Mammary epithelial cell (primary cell): ENCODE measurements at regions of chr6 and their contacts with region 1.

Region 1: DNA sequence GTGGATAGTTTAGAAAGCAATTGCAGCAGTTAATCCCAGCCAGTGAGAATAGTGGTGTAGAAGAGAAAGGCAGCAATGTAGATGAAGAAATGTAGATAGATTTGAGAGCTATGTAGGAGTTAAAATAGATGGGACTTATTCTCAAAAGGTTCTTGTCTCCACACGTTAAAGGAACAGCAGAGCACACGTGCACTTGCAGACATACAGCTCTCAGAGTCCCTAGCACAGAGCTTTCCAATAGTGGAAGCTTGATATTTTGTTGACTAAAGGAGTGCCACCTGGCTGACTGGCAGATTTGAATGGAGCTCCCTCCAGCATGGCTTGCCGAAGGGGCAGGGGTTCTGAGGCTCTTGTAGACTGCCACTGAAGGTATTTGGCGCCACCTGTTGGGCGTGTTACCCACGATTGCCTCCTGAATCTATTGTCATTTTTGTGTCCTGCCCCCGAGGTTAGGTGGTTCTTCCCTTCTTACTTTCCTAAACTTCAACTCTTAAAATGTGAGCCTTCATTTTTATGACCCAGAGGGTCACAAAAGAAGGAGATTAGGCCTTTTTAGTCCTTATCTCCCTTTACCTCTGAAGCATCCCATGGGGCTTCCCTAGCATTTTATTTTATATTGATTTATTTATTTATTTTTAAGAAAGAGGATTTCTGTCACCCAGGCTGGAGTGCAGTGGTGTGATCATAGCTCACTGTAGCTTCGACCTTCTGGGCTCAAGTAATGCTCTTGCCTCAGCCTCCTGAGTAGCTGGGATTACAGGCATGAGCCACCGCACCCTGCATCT is 16.4 kb downstream of the BRD2 start:
- DNase-seq: peak; percentile 60
- H3K4me3 ChIP-seq: no peak overlapping the region
- H3K27ac ChIP-seq: no peak overlapping the region
- H3K4me1 ChIP-seq: no peaks in the 10 kb centered on the region
- H3K27me3 ChIP-seq: no peaks in the 10 kb centered on the region
- CTCF ChIP-seq: peak; percentile 79 to 92

Region 2: DNA sequence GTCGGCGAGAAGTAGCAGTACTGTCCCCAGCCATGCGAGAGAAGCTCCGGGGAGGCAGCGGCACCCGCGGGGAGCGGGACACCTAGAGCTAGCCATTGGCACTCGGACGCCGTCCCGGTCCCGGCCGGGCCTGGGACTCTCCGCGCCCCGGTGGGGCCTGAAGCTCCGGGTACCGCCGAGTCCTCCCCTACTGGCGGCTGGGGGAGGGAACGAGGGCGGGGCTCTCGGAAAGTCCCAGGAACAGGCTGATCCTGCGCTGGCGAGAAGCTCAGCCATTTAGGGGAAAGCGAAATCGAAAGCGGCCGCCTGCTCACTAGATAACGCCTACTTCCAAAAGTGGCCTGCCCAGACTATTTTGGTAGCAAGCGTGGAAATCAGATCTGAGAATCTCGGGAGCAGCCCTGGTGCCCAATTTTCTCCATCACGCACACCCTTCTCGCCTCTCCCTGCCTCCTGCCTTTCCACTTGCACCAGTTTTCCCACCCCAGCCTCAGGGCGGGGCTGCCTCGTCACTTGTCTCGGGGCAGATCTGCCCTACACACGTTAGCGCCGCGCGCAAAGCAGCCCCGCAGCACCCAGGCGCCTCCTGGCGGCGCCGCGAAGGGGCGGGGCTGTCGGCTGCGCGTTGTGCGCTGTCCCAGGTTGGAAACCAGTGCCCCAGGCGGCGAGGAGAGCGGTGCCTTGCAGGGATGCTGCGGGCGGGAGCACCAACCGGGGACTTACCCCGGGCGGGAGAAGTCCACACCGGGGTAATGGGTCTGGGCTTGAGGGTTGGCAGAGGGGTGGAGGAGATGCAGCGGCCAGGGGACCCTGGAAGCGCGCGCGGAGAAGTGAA is 131.0 kb before region 1 on chr6 and contains the starts of genes PSMB9 and TAP1:
- CTCF ChIA-PET with region 1: no interaction called
- dilution Hi-C with region 1: no loop called
- in situ Hi-C with region 1: no loop called
- intact Hi-C with region 1: no loop called
- DNase-seq: peak; percentile 93
- H3K4me3 ChIP-seq: peak within 1 kb of the TSS; percentile 62 to 94 (median 86)
- H3K27ac ChIP-seq: peak within 1 kb of the TSS; percentile 74
- H3K4me1 ChIP-seq: peaks cover 13% of the 10 kb centered on the region
- H3K27me3 ChIP-seq: no peaks in the 10 kb centered on the region
- CTCF ChIP-seq: peak; percentile 49 to 82
- total RNA-seq, gene PSMB9: 2.7 to 10.1 TPM
- total RNA-seq, gene TAP1: 49.2 to 50.1 TPM

Region 3: DNA sequence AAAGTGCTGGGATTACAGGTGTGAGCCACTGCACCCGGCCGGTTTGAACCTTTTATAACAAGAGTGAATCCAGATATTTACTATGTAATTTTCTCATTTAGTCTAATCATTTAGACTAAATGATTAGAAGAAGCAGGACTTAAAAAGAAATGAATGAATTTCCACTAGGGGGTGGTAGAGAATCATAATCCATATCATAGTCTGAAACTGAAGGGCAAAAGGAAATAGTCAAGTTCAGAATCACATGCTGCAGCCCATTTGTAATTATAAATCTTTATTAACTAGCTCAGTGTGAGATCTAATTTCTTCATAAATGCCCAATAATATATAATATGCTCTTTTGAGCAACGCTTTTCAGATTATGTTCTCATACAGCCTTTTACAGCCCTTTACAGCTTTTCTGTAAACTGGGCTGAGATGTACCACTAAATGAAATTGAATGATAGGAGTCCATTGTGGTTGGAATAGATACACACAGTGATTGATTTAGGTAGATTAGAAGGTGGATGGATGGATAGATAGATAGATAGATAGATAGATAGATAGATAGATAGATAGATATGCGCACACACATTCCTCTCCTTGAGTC is 99.0 kb before region 1 on chr6:
- CTCF ChIA-PET with region 1: interaction called, 3 read pairs
- dilution Hi-C with region 1: no loop called
- in situ Hi-C with region 1: loop called in 1 of 2 experiments (anchors 25 kb)
- intact Hi-C with region 1: loop called (anchors 1 kb)
- DNase-seq: peak; percentile 45
- H3K4me3 ChIP-seq: no peak overlapping the region
- H3K27ac ChIP-seq: no peak overlapping the region
- H3K4me1 ChIP-seq: peaks cover 13% of the 10 kb centered on the region
- H3K27me3 ChIP-seq: no peaks in the 10 kb centered on the region
- CTCF ChIP-seq: peak; percentile 29 to 55

Region 4: DNA sequence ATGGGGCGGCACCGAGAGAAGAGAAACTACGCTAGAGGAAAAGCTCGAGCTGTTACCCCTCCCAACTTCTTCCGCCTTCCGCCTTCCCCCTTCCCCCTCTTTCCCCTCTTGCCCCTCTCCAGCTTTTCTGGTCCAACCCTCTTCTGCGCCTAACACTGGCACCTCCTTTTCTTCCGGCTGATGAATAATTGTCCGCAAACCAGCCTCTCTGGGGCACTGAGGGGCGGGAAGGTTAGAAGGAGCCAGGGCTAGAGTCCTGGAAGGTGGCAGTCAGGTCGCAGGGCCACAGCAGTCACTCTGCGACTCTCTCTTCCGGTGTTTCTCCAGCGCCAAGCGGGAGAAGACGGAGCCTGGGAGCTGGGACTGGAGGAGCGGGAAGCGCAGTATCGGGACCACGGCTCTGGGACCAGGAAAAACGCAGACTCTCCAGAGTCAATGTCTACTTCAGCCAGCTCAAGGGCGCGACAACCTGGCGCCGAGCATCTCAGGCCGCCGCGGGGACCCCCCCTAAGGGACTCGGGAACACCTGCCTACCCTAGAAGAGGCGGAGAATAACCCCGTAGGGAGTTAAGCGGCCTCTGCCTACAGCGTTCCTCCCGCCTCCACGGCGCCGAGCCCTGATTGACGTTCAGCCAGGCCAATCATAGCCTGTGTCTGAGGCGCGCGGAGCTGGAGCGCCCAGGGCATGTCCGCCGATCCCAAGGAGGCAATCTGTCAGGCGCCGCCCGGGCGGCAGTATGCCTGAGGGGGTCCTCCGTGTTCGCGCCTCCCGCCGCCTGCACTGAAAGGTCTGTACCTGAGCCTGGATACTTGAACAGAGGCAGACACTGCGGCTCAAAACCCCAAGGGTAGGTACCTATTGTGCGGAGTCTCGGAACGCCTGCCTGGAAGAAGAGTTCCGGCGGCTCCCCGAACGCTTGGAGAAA is 90.5 kb before region 1 on chr6:
- CTCF ChIA-PET with region 1: interaction called, 3 read pairs
- dilution Hi-C with region 1: no loop called
- in situ Hi-C with region 1: loop called in 1 of 2 experiments (anchors 25 kb)
- intact Hi-C with region 1: no loop called
- DNase-seq: peak; percentile 91
- H3K4me3 ChIP-seq: peak overlapping the region; percentile 72 to 84 (median 76)
- H3K27ac ChIP-seq: peak overlapping the region; percentile 65
- H3K4me1 ChIP-seq: peaks cover 13% of the 10 kb centered on the region
- H3K27me3 ChIP-seq: no peaks in the 10 kb centered on the region
- CTCF ChIP-seq: no peak

Region 5: GRCh38 chr6:32906539-32906938 is 78.3 kb before region 1 on chr6:
- CTCF ChIA-PET with region 1: interaction called, 5 read pairs
- dilution Hi-C with region 1: loop called (anchors 5 kb)
- in situ Hi-C with region 1: no loop called
- intact Hi-C with region 1: no loop called
- DNase-seq: peak; percentile 46
- H3K4me3 ChIP-seq: no peak overlapping the region
- H3K27ac ChIP-seq: no peak overlapping the region
- H3K4me1 ChIP-seq: peaks cover 8% of the 10 kb centered on the region
- H3K27me3 ChIP-seq: no peaks in the 10 kb centered on the region
- CTCF ChIP-seq: no peak

Region 6: DNA sequence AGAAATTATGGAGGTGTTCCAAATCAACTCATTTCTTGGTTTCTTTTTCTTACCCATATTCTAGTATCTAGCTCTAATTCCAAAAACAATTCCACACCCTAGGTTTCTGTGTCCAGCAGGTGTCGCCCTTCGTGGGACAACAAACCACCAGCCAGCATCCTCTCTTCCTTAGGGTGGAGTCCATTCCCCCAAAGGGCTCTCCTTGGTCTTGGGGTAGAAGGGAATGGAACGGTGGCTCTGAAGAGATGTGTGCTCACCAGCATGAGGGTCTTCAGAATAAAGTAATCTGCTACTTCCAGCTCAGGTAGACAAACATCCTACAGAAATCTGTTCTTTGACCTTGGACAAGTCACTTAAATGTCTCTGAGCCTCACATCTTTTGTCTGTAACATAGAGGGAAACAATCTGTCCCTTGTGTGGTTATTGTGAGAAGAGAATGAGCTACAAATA is 51.1 kb before region 1 on chr6:
- CTCF ChIA-PET with region 1: interaction called, 15 read pairs
- dilution Hi-C with region 1: no loop called
- in situ Hi-C with region 1: no loop called
- intact Hi-C with region 1: loop called (anchors 1 kb)
- DNase-seq: peak; percentile 40
- H3K4me3 ChIP-seq: no peak overlapping the region
- H3K27ac ChIP-seq: no peak overlapping the region
- H3K4me1 ChIP-seq: no peaks in the 10 kb centered on the region
- H3K27me3 ChIP-seq: peaks cover 2% of the 10 kb centered on the region
- CTCF ChIP-seq: peak; percentile 70 to 85

Region 7: GRCh38 chr6:32952817-32953739 is 31.7 kb before region 1 on chr6 and contains the start of gene HLA-DMA:
- CTCF ChIA-PET with region 1: no interaction called
- dilution Hi-C with region 1: no loop called
- in situ Hi-C with region 1: no loop called
- intact Hi-C with region 1: loop called (anchors 1 kb)
- DNase-seq: peak; percentile 94
- H3K4me3 ChIP-seq: no peak within 1 kb of the TSS
- H3K27ac ChIP-seq: no peak within 1 kb of the TSS
- H3K4me1 ChIP-seq: peaks cover 8% of the 10 kb centered on the region
- H3K27me3 ChIP-seq: no peaks in the 10 kb centered on the region
- CTCF ChIP-seq: peak; percentile 73 to 81
- total RNA-seq, gene HLA-DMA: 1.5 to 1.7 TPM

Region 8: DNA sequence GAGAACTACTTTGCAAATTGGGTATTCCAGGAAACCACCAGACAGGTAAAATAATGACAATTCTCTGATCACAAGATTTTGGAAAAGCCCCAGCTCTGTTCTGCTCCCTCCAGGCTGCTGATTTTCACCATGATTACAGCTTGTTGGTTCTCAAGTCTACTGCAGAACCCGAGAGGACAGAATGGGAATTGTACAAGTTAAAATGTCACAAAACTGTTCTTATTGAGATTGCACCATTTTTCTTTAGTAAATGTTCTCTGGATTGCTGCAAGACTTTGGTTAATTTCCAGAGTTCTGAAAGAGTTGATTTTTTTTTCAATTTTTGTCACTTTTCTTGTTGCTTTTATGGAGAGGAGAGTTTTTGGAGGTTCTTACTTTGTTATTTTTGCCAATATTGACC is 51.7 kb after region 1 on chr6:
- CTCF ChIA-PET with region 1: no interaction called
- dilution Hi-C with region 1: loop called (anchors 5 kb)
- in situ Hi-C with region 1: no loop called
- intact Hi-C with region 1: no loop called
- DNase-seq: no peak
- H3K4me3 ChIP-seq: no peak overlapping the region
- H3K27ac ChIP-seq: no peak overlapping the region
- H3K4me1 ChIP-seq: no peaks in the 10 kb centered on the region
- H3K27me3 ChIP-seq: no peaks in the 10 kb centered on the region
- CTCF ChIP-seq: no peak